Activated CD4-positive, alpha-beta T cell treated with anti-CD3 and anti-CD28 coated beads, Interleukin-2, amount 10 ng/mL, durations not matched to agents 24 days and 14 days (primary cell): ENCODE measurements at regions of chr3 and their contacts with region 1.

Region 1: GRCh38 chr3:29186982-29187725 is 93.7 kb upstream of the RBMS3 start:
- DNase-seq: no peak
- H3K4me3 Mint-ChIP-seq: no peak overlapping the region
- H3K27ac Mint-ChIP-seq: peak overlapping the region; percentile 73
- H3K4me1 Mint-ChIP-seq: peaks cover 20% of the 10 kb centered on the region
- H3K27me3 Mint-ChIP-seq: no peaks in the 10 kb centered on the region

Region 2: DNA sequence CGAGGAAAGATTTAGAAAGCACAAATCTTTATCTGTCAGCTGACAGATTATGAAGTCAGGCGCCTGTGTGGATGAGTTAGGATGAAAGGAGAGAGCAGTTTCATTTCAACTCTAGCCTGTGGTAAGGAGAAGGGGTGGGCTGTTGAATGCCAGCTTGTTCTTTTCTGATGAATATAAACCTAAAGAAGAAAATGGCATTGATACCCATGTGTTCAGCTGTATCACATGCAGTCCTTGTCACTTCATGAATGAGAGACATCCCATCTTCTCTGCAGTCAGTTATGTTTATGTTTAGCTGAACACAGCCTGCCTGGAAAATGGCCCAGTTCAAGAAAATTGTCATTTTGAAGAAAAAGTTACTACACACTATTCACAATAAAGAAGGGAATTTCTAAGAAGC is 252.0 kb before region 1 on chr3:
- intact Hi-C with region 1: loop called (anchors 1 kb)
- DNase-seq: peak; percentile 61
- H3K4me3 Mint-ChIP-seq: peak overlapping the region; percentile 74
- H3K27ac Mint-ChIP-seq: peak overlapping the region; percentile 85
- H3K4me1 Mint-ChIP-seq: peaks cover 40% of the 10 kb centered on the region
- H3K27me3 Mint-ChIP-seq: no peaks in the 10 kb centered on the region

Region 3: DNA sequence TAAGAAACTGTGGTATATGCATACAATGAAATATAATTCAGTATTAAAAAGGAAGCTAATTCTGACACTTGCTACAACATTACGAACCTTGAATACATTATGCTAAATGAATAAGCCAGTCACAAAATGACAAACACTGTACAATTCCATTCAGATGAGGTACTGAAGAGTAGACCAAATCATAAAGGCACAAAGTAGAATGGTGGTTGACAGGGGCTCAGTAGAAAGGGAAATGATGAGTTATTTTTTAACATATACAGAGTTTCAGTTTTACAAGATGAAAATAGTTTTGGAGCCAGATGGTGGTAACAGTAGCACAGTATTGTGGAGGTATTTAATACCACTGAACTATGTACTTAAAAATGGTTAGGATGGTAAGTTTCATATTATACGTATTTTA is 160.9 kb before region 1 on chr3:
- intact Hi-C with region 1: loop called (anchors 2 kb)
- DNase-seq: no peak
- H3K4me3 Mint-ChIP-seq: no peak overlapping the region
- H3K27ac Mint-ChIP-seq: peak overlapping the region; percentile 71
- H3K4me1 Mint-ChIP-seq: peaks cover 5% of the 10 kb centered on the region
- H3K27me3 Mint-ChIP-seq: no peaks in the 10 kb centered on the region

Region 4: DNA sequence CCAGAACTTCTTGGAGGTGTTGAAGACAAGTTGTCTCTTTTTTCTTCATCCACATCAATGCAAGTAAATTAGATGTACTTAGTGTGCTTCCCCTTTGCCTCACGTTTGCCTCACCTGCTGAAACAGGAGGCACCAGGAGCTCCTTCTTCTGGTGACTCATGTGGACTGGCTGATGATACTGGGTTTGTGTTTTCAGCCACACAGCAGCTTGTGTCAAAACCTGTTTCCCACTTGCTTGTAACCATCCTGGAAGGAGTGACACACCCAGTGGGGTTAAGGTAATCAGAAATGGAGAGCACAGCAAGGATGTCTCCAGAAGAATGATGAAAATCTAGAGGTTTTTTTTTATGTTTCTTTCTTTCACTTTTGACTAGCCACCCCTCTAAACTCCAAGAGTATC is 49.6 kb before region 1 on chr3:
- intact Hi-C with region 1: loop called (anchors 1 kb)
- DNase-seq: no peak
- H3K4me3 Mint-ChIP-seq: no peak overlapping the region
- H3K27ac Mint-ChIP-seq: no peak overlapping the region
- H3K4me1 Mint-ChIP-seq: peaks cover 6% of the 10 kb centered on the region
- H3K27me3 Mint-ChIP-seq: peaks cover 1% of the 10 kb centered on the region

Region 5: DNA sequence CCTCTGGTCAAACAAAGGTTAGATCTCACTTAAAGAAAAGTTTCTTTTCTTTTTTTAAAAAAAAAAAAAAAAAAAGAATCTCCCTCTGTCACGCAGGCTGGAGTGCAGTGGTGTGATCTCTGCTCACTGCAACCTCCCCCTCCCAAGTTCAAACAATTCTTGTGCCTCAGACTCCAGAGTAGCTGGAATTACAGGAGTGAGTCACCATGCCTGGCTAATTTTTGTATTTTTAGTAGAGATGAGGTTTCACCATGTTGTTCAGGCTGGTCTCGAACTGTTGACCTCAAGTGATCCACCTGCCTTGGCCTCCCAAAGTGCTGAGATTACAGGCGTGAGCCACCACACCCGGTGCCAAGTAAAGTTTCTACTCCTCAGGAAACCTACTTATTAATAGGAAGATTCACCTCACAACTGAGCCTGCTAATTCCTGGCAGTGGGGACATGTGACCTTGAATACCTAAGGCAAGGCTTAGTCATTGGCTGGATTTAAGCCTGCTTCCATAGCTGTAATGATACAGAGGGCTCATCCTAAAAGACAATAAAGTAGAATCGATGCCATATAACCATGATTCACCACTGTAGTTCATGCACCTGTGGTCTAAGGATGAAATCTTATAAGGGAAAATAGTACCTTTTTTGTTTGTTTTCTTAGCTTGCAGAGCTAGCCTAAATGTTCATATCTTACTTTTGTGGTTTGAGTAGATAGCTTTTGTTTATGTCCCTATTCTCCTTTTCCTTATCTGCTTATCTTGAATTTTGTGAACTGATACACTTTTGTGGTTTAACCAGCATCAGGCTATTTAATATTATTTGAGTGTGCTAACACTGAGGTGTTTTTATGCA is 68.9 kb after region 1 on chr3:
- intact Hi-C with region 1: no loop called
- DNase-seq: no peak
- H3K4me3 Mint-ChIP-seq: no peak overlapping the region
- H3K27ac Mint-ChIP-seq: peak overlapping the region; percentile 10
- H3K4me1 Mint-ChIP-seq: peaks cover 7% of the 10 kb centered on the region
- H3K27me3 Mint-ChIP-seq: no peaks in the 10 kb centered on the region

Region 6: GRCh38 chr3:29280404-29281093 is 93.4 kb after region 1 on chr3 and contains the start of gene RBMS3:
- intact Hi-C with region 1: loop called (anchors 1 kb)
- DNase-seq: peak; percentile 74
- H3K4me3 Mint-ChIP-seq: peak within 1 kb of the TSS; percentile 85
- H3K27ac Mint-ChIP-seq: peak within 1 kb of the TSS; percentile 78
- H3K4me1 Mint-ChIP-seq: peaks cover 30% of the 10 kb centered on the region
- H3K27me3 Mint-ChIP-seq: peaks cover 5% of the 10 kb centered on the region
- total RNA-seq, gene RBMS3: 4.3 and 5.0 TPM in 2 replicates

Region 7: GRCh38 chr3:29373131-29373680 is 186.1 kb after region 1 on chr3:
- intact Hi-C with region 1: no loop called
- DNase-seq: no peak
- H3K4me3 Mint-ChIP-seq: no peak overlapping the region
- H3K27ac Mint-ChIP-seq: no peak overlapping the region
- H3K4me1 Mint-ChIP-seq: peaks cover 7% of the 10 kb centered on the region
- H3K27me3 Mint-ChIP-seq: peaks cover 2% of the 10 kb centered on the region

Region 8: DNA sequence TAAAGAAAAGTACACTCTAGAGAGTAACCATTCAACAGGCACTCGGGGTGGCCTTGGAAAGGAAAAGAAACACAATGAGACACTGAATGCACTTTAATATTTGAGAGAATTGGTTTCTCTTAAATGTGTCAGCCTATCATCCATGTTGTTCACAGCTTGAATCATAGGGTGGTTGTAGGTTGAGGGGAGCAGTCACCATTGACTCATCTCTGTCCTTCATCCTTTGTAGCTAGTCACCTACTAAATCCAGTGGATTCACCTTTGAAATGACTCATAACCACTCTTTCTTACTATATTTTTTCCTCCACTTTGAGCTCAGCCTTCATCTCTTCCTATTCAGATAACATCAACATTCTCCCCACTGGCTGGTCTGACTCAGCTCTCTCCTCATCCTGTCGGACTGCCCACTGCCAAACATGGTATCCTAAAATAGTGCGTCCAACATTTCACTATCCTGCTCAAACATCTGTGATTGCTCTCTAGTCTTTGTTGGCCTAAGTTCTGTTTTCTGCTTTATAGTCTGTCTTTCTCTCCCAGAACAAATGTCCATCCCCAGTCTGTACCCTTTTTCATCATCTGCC is 1890.0 kb after region 1 on chr3:
- intact Hi-C with region 1: loop called (anchors 10 kb)
- DNase-seq: peak; percentile 79
- H3K4me3 Mint-ChIP-seq: peak overlapping the region; percentile 22
- H3K27ac Mint-ChIP-seq: peak overlapping the region; percentile 83
- H3K4me1 Mint-ChIP-seq: peaks cover 32% of the 10 kb centered on the region
- H3K27me3 Mint-ChIP-seq: no peaks in the 10 kb centered on the region